Endothelial cell of umbilical vein (primary cell): ENCODE measurements at regions of chr13 and their contacts with region 1.

Region 1: DNA sequence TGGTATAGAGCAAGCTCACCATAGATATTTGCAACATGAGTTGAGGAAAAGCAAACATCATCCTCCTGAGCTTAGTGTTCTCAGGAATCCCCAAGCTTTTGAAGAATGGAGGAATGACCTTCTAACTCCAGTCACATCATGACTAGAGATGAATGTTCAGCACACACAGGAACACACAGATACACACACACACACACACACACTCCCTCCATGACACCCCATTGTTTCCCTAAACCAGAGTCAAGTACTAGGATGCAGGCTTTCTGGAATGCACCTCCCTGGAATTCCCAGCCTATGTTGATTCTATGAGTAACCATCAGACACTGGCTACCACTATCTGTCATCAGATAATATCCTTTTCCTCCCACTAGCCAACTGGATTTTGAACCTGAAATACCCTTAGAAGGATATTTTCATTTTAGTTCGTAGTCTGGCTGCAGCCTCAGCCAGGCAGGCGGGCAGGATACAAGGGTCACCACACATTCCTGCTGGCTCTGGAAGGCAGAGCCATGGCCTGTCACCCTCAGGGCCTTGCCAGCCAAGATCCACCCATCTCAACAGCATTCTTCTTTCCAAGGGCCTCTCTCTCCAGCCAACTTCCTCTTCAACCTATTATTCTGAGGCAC is 162.4 kb downstream of the FOXO1 start:
- DNase-seq: peak; percentile 99
- H3K4me3 ChIP-seq: no peak overlapping the region
- H3K27ac ChIP-seq: peak overlapping the region; percentile 99
- H3K4me1 ChIP-seq: peaks cover 51% of the 10 kb centered on the region
- H3K27me3 ChIP-seq: no peaks in the 10 kb centered on the region
- CTCF ChIP-seq: no peak
- POLR2A ChIP-seq: peak; percentile 74

Region 2: GRCh38 chr13:40116008-40116407 is 388.1 kb before region 1 on chr13:
- CTCF ChIA-PET with region 1: no interaction called
- POLR2A ChIA-PET with region 1: no interaction called
- dilution Hi-C with region 1: no loop called
- intact Hi-C with region 1: loop called (anchors 1 kb)
- DNase-seq: peak; percentile 98
- H3K4me3 ChIP-seq: no peak overlapping the region
- H3K27ac ChIP-seq: peak overlapping the region; percentile 93
- H3K4me1 ChIP-seq: peaks cover 17% of the 10 kb centered on the region
- H3K27me3 ChIP-seq: no peaks in the 10 kb centered on the region
- CTCF ChIP-seq: no peak
- POLR2A ChIP-seq: no peak

Region 3: GRCh38 chr13:40477623-40478608 is 26.2 kb before region 1 on chr13:
- CTCF ChIA-PET with region 1: no interaction called
- POLR2A ChIA-PET with region 1: no interaction called
- dilution Hi-C with region 1: no loop called
- intact Hi-C with region 1: loop called (anchors 1 kb)
- DNase-seq: peak; percentile 94
- H3K4me3 ChIP-seq: peak overlapping the region in 1 of 3 experiments; percentile 10
- H3K27ac ChIP-seq: peak overlapping the region; percentile 92
- H3K4me1 ChIP-seq: peaks cover 32% of the 10 kb centered on the region
- H3K27me3 ChIP-seq: no peaks in the 10 kb centered on the region
- CTCF ChIP-seq: no peak
- POLR2A ChIP-seq: peak; percentile 36

Region 4: GRCh38 chr13:40490086-40490758 is 13.9 kb before region 1 on chr13:
- CTCF ChIA-PET with region 1: no interaction called
- POLR2A ChIA-PET with region 1: no interaction called
- dilution Hi-C with region 1: no loop called
- intact Hi-C with region 1: no loop called
- DNase-seq: no peak
- H3K4me3 ChIP-seq: no peak overlapping the region
- H3K27ac ChIP-seq: no peak overlapping the region
- H3K4me1 ChIP-seq: peaks cover under 1% of the 10 kb centered on the region
- H3K27me3 ChIP-seq: no peaks in the 10 kb centered on the region
- CTCF ChIP-seq: no peak
- POLR2A ChIP-seq: no peak

Region 5: GRCh38 chr13:40558656-40559055 is 54.6 kb after region 1 on chr13:
- CTCF ChIA-PET with region 1: interaction called, 6 read pairs
- POLR2A ChIA-PET with region 1: no interaction called
- dilution Hi-C with region 1: no loop called
- intact Hi-C with region 1: loop called (anchors 1 kb)
- DNase-seq: peak; percentile 95
- H3K4me3 ChIP-seq: peak overlapping the region in 1 of 3 experiments; percentile 1
- H3K27ac ChIP-seq: peak overlapping the region; percentile 61
- H3K4me1 ChIP-seq: peaks cover 56% of the 10 kb centered on the region
- H3K27me3 ChIP-seq: no peaks in the 10 kb centered on the region
- CTCF ChIP-seq: no peak
- POLR2A ChIP-seq: peak; percentile 35

Region 6: GRCh38 chr13:40732658-40733057 is 228.6 kb after region 1 on chr13:
- CTCF ChIA-PET with region 1: no interaction called
- POLR2A ChIA-PET with region 1: no interaction called
- dilution Hi-C with region 1: no loop called
- intact Hi-C with region 1: no loop called
- DNase-seq: no peak
- H3K4me3 ChIP-seq: no peak overlapping the region
- H3K27ac ChIP-seq: no peak overlapping the region
- H3K4me1 ChIP-seq: no peaks in the 10 kb centered on the region
- H3K27me3 ChIP-seq: no peaks in the 10 kb centered on the region
- CTCF ChIP-seq: no peak
- POLR2A ChIP-seq: no peak